ENCODE measurements at regions of chr12 and their contacts with region 1.

Region 1: GRCh38 chr12:67648521-67649260 is at the start of gene DYRK2:
- DNase-seq: peak; percentile 74 to 79
- H3K4me3 ChIP-seq: peak within 1 kb of the TSS; percentile 94 to 98
- H3K27ac ChIP-seq: peak within 1 kb of the TSS; percentile 97
- H3K4me1 ChIP-seq: no peaks in the 10 kb centered on the region
- H3K27me3 ChIP-seq: no peaks in the 10 kb centered on the region
- CTCF ChIP-seq: peak in 3 of 4 experiments; percentile 7 to 26 (median 9)
- POLR2A ChIP-seq: peak; percentile 83 to 87
- total RNA-seq, gene DYRK2: 21.5 to 59.7 (median 34.7) TPM

Region 2: DNA sequence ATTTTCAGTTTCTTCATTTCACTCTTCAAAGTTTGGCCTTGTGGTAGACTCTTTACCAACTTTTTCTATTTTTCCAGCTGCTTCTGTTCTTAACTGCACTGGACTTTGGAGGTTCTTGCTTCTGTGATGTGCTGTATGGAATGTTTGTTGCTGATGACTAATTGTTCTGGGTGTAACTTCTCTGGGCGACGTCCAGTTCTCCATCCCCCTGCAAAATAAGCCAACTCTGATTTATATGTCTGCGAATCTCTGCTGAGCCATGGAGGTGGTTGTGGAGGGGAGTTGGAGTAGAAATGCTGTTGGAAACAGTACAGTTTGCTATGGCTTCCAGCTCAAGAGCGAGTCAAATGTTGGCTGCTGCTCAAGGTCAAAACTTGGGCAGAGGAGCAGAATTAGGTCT is 114.0 kb before region 1 on chr12:
- intact Hi-C with region 1: no loop called
- DNase-seq: peak; percentile 26 to 32
- H3K4me3 ChIP-seq: no peak overlapping the region
- H3K27ac ChIP-seq: no peak overlapping the region
- H3K4me1 ChIP-seq: no peaks in the 10 kb centered on the region
- H3K27me3 ChIP-seq: no peaks in the 10 kb centered on the region
- CTCF ChIP-seq: no peak
- POLR2A ChIP-seq: no peak

Region 3: DNA sequence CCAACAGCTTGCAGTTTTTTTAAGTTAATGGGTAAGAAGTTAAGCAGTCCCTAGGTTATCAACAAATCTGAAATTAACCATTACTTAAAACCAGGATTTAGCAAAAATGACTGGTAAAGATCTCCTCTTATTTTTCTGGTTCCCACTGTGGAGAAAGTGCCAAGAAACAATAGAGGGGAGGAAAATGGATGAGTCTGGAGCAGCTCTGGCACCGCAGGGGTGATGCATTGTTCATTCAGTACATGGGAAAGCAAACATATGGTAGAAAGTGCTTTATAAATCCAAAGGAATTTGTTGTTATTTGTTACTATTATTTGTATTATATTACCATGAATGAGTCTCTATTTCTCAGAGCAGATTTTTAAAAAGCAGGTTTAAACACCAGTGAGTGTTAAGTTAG is 92.0 kb after region 1 on chr12:
- intact Hi-C with region 1: no loop called
- DNase-seq: no peak
- H3K4me3 ChIP-seq: no peak overlapping the region
- H3K27ac ChIP-seq: no peak overlapping the region
- H3K4me1 ChIP-seq: no peaks in the 10 kb centered on the region
- H3K27me3 ChIP-seq: no peaks in the 10 kb centered on the region
- CTCF ChIP-seq: no peak
- POLR2A ChIP-seq: no peak

Region 4: GRCh38 chr12:67827820-67828383 is 179.2 kb after region 1 on chr12:
- intact Hi-C with region 1: loop called (anchors 5 kb)
- DNase-seq: peak; percentile 21 to 74
- H3K4me3 ChIP-seq: peak overlapping the region; percentile 18 to 29
- H3K27ac ChIP-seq: peak overlapping the region; percentile 89 to 90
- H3K4me1 ChIP-seq: no peaks in the 10 kb centered on the region
- H3K27me3 ChIP-seq: no peaks in the 10 kb centered on the region
- CTCF ChIP-seq: no peak
- POLR2A ChIP-seq: peak; percentile 22 to 23

Region 5: DNA sequence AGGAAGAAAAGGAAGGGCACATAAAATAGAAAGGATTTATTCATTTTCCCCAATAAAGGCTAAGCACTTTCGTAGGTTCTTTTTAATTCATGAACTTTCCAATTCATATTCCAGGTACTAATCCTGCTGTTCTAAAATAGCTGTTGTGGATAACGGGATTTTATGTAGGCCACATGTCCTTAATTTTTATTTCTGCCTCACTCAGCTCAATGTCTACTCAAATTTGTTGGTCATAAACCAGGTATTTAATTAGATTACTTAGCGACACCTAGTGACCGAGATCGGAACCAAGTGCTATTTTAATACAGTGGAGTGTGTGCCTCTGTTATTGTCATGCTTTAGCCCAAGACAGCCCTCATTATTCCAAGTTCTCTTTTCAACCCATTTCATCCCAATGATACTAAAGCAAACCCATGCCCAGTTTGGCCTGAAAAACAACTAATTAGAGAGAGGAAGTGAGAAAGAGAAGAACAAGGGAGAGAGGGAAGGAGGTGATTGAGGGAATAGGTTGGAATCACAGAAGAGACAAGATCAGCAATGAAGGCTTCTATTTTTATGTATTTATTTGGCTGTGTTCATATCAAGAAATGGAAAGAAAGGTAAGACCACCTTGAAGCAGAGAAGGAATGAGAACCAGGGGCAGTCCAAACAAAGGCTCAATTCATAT is 294.7 kb after region 1 on chr12:
- intact Hi-C with region 1: loop called (anchors 10 kb)
- DNase-seq: peak; percentile 37 to 77
- H3K4me3 ChIP-seq: no peak overlapping the region
- H3K27ac ChIP-seq: peak overlapping the region in 1 of 2 donors; percentile 27
- H3K4me1 ChIP-seq: peaks cover 3% of the 10 kb centered on the region in 2 donors
- H3K27me3 ChIP-seq: no peaks in the 10 kb centered on the region
- CTCF ChIP-seq: peak; percentile 68 to 84 (median 76)
- POLR2A ChIP-seq: no peak

Region 6: DNA sequence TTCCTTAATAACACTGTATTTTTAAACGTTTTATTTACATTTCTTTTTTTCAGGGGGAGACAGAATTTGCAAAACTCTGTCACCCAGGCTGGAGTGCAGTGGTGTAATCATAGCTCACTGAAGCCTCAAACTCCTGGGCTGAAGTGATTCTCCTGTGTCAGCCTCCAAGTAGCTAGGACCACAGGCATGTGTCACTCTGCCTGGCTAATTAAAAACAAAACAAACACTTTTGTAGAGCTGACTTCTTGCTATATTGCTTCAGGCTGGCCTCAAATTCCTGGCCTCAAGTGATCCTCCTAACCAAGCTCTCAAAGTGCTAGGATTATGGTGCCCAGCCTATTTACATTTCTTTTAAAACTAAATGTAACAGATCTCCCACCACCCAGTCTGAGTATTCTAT is 1603.3 kb after region 1 on chr12:
- intact Hi-C with region 1: no loop called
- DNase-seq: no peak
- H3K4me3 ChIP-seq: no peak overlapping the region
- H3K27ac ChIP-seq: no peak overlapping the region
- H3K4me1 ChIP-seq: peaks cover 0 to 5% of the 10 kb centered on the region in 2 donors
- H3K27me3 ChIP-seq: no peaks in the 10 kb centered on the region
- CTCF ChIP-seq: no peak
- POLR2A ChIP-seq: no peak

Measured in uterus (tissue), 4 donors.